ENCODE measurements at regions of chr2 and their contacts with region 1.

Region 1: DNA sequence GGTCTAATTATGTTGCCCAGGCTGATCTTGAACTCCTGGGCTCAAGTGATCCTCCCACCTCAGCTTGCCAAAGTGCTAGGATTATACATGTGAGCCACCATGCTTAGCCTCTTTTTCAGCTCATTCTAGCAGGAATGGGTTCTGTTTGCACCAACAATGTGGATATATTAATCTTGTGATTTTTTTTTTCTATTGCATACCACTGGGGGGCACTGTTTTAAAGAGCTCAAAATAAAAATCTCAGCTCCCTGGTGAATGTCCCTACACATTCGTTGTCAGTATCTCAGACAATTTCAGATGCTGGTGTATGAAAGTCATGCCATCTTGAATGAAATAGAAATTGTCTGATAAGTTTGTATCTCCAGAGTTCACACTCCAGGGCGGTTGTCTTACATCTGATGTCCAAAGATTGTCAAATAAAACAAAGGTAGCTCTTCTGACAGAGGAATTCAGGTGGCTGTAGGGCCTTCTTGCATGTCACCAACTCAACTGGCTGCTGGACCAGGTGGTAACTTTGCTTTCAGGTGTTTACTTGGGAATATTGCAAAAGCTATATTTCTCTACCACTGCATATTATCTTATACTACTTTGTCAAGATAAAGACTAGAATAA is 3.1 kb upstream of the MATN3 start:
- DNase-seq: no peak
- H3K4me3 Mint-ChIP-seq: no peak overlapping the region
- H3K27ac Mint-ChIP-seq: no peak overlapping the region
- H3K4me1 Mint-ChIP-seq: peaks cover 3% of the 10 kb centered on the region
- H3K27me3 Mint-ChIP-seq: peaks cover 39% of the 10 kb centered on the region

Region 2: GRCh38 chr2:19955544-19956422 is 59.8 kb before region 1 on chr2:
- intact Hi-C with region 1: loop called (anchors 1 kb)
- DNase-seq: peak; percentile 22
- H3K4me3 Mint-ChIP-seq: no peak overlapping the region
- H3K27ac Mint-ChIP-seq: no peak overlapping the region
- H3K4me1 Mint-ChIP-seq: no peaks in the 10 kb centered on the region
- H3K27me3 Mint-ChIP-seq: no peaks in the 10 kb centered on the region

Region 3: DNA sequence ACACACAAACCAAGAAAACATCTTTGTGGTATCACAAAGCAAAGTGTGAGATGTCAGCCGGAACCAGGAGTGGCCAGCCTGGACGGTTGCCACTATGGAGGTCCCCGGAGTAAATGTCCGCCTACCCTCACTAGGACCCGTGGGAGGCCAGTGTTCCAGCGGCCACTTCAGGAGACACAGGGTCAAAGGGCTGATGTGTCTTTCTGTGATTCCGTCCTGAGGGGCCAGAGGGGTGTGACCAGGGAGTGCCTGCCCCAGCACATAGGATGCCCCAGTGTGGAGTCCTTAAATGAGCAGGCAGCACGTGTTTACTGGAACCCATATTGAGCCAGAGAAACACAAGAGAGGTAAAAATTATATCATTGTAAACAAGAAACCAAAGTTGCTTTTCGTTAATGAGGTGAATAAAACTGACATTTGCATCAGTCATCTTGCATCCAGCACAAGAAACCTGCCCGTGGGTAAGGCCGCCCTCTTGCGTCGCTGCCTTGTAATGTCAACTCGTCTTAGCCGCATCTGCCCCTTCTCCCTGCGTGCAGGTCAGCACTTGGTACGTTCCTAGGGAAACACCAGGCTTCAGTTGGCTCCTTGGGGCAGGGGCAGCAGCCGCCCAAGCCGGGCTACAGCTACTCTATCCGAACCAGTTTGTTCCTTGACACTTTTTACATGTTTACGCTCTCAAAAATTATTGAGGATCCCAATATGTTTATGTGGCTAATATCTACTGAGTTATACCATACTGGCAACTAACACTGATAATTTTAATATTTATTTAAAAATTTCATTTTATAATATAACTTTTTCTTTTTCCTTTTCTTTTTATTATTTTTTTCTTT is 82.5 kb after region 1 on chr2:
- intact Hi-C with region 1: loop called (anchors 1 kb)
- DNase-seq: peak; percentile 46
- H3K4me3 Mint-ChIP-seq: no peak overlapping the region
- H3K27ac Mint-ChIP-seq: no peak overlapping the region
- H3K4me1 Mint-ChIP-seq: peaks cover 4% of the 10 kb centered on the region
- H3K27me3 Mint-ChIP-seq: peaks cover 10% of the 10 kb centered on the region